ENCODE measurements at regions of chr6 and their contacts with region 1.

Region 1: DNA sequence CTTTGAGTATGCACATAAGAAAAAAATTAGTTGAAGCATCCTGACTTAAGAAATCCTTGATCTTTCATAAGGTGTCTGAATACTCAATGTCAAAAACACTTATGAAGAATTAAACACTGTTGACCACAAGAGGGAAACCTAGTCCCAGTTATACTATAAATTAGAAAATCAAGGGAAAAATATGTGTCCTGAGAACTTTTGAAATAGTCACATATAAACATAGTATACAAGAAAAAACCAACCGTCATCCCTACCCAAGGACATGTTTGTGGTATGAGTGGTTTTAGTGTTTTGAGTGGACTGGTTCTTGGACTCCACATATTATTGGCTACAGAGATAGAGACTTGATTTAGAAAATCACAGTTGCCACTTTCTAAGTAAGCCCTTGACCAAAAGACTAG is 7.6 kb upstream of the HLA-DRA start:
- DNase-seq: no peak
- H3K4me3 ChIP-seq: no peak overlapping the region
- H3K27ac ChIP-seq: no peak overlapping the region
- H3K4me1 ChIP-seq: no peaks in the 10 kb centered on the region
- H3K27me3 ChIP-seq: peaks cover 17% of the 10 kb centered on the region
- CTCF ChIP-seq: peak; percentile 55

Region 2: DNA sequence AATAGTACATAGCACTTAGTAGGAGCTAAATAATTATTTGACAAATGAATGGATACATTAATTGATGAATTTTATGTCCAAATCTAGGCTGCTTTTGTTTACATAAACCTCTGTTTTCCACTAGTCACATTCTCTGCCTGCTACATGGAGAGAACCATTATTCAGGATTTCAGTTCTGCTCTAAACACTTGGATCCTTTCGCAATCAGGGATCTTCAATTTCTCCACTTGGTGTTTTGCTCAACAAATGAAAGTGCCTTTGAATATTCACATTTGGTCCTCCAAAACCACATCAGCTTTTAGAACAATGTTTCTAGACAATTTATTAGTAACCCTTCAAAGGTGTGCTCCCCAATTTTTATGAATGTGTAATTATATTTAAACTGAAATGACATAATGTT is 265.0 kb after region 1 on chr6:
- intact Hi-C with region 1: loop called (anchors 5 kb)
- DNase-seq: no peak
- H3K4me3 ChIP-seq: no peak overlapping the region
- H3K27ac ChIP-seq: no peak overlapping the region
- H3K4me1 ChIP-seq: no peaks in the 10 kb centered on the region
- H3K27me3 ChIP-seq: peaks cover 32% of the 10 kb centered on the region
- CTCF ChIP-seq: no peak

Measured in left ventricle myocardium inferior (tissue), 1 donor.